CD8-positive, alpha-beta memory T cell (primary cell): ENCODE measurements at regions of chr7 and their contacts with region 1.

Region 1: GRCh38 chr7:142323706-142324105 is 65.8 kb upstream of the PRSS58 start:
- DNase-seq: peak in 3 of 5 donors; percentile 25 to 54 (median 36)
- H3K4me3 ChIP-seq: no peak overlapping the region
- H3K4me3 Mint-ChIP-seq: peak overlapping the region in 4 of 7 donors; percentile 3 to 57 (median 42)
- H3K27ac ChIP-seq: no peak overlapping the region
- H3K27ac Mint-ChIP-seq: peak overlapping the region; percentile 10 to 90 (median 64)
- H3K4me1 ChIP-seq: peaks cover 10% of the 10 kb centered on the region
- H3K4me1 Mint-ChIP-seq: peaks cover 22 to 24% (median 22%) of the 10 kb centered on the region in 3 donors
- H3K27me3 ChIP-seq: no peaks in the 10 kb centered on the region
- H3K27me3 Mint-ChIP-seq: peaks cover 0 to 16% of the 10 kb centered on the region in 2 donors

Region 2: DNA sequence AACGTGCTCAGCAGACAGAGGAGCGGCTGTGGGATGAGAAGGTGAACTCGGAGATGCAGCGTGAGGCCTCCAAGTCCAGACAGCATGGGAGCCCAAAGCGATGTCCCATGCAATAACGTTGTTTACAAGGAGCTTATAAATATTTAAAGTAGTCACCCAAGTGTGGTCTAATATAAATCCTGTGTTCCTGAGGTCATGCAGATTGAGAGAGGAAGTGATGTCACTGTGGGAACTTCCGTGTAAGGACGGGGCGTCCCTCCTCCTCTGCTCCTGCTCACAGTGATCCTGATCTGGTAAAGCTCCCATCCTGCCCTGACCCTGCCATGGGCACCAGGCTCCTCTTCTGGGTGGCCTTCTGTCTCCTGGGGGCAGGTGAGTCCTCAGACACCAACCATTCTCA is 28.8 kb after region 1 on chr7:
- CTCF ChIA-PET with region 1: interaction called, 13 read pairs
- POLR2A ChIA-PET with region 1: interaction called, 6 read pairs
- DNase-seq: no peak
- H3K4me3 ChIP-seq: peak overlapping the region; percentile 30
- H3K4me3 Mint-ChIP-seq: peak overlapping the region; percentile 45 to 80 (median 65)
- H3K27ac ChIP-seq: no peak overlapping the region
- H3K27ac Mint-ChIP-seq: peak overlapping the region; percentile 3 to 95 (median 86)
- H3K4me1 ChIP-seq: peaks cover 22% of the 10 kb centered on the region
- H3K4me1 Mint-ChIP-seq: peaks cover 27 to 41% (median 34%) of the 10 kb centered on the region in 3 donors
- H3K27me3 ChIP-seq: no peaks in the 10 kb centered on the region
- H3K27me3 Mint-ChIP-seq: peaks cover 1 to 3% of the 10 kb centered on the region in 2 donors